Activated T-helper 2 cell treated with anti-CD3 and anti-CD28 coated beads, Interferon-gamma antibody, Interleukin-2, Interleukin-4, amounts not matched to agents 10 μg/mL and 5 μg/mL and 100 μg/mL, durations not matched to agents 14 hours and 24 hours and 36 hours (primary cell): ENCODE measurements at regions of chr19 and their contacts with region 1.

Region 1: DNA sequence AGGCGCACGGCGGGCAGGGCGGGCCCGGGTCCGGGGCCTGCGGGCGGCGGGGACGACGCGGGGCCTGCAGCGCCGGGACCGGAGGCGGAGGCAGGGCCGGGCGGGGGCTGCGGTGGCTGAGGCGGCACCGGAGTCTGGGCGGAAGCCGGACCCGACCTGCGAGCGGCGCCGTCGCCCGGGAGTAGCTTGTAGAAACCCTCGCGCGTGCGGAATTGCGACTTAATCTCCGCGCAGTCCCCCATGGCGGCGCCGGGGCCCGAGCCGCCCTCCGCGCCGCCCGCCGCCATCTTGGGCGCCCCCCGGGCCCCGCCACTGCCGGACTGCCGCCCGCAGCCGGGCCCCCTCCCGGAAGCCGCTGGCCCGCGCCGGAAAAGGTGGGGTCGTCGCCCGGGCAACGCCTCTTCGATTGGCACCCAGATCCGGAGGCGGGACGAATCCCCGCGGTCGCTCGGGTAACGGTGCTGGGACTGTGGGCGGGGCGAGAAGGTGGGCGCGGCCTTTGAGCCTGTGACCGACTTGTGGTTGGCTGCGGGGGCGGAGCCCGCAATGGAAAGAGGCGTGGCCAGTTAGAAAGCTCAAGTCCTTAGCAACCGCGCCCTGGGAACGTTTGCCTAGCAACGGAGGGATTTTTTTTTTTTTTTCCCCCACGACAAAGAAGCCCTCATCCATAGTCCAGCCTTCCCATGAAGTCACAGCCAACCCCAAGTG is at the start of gene DMWD:
- DNase-seq: peak; percentile 99
- H3K4me3 Mint-ChIP-seq: peak within 1 kb of the TSS; percentile 87
- H3K27ac Mint-ChIP-seq: peak within 1 kb of the TSS; percentile 72
- H3K4me1 Mint-ChIP-seq: peaks cover 27% of the 10 kb centered on the region
- H3K27me3 Mint-ChIP-seq: peaks cover 41% of the 10 kb centered on the region
- total RNA-seq, gene DMWD: 44.7 and 45.6 TPM in 2 replicates

Region 2: GRCh38 chr19:45779231-45780145 is 13.1 kb before region 1 on chr19:
- intact Hi-C with region 1: loop called (anchors 1 kb)
- DNase-seq: peak; percentile 86
- H3K4me3 Mint-ChIP-seq: peak overlapping the region; percentile 77
- H3K27ac Mint-ChIP-seq: no peak overlapping the region
- H3K4me1 Mint-ChIP-seq: peaks cover 7% of the 10 kb centered on the region
- H3K27me3 Mint-ChIP-seq: peaks cover 15% of the 10 kb centered on the region